ENCODE measurements at regions of chr9 and their contacts with region 1.

Region 1: DNA sequence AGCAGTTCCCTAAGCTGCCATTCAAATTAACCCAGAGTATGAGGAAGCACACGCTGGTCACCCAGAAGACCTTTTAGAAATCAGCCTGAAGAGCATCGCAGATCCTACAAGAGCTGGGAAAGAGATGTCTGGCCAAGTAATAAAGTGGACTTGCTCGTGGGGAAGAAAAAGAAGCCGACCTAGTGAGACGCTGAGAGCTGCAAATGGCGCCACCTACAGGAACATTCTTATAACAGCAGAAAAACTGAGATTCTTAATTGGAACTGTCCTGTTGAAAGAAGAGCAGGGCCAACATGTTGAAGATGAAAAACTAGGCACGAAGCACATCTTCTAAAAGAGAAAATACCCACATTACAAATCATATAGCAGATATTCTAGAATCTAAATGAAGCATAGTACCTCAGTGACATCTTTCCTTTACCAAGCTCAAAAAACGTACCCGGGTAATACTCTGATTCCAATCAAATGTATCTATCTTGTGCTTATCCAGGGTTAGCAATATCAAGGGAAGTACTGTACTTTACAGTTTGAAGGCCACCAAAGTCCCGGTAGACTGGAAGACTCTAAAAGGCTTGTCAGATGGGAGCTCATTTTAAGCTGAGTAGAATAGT is 3.9 kb upstream of the GNAQ start:
- DNase-seq: peak; percentile 45
- H3K4me3 ChIP-seq: no peak overlapping the region
- CTCF ChIP-seq: peak; percentile 72

Region 2: GRCh38 chr9:77751341-77752091 is 284.0 kb before region 1 on chr9:
- CTCF ChIA-PET with region 1: interaction called, 10 read pairs
- POLR2A ChIA-PET with region 1: no interaction called
- DNase-seq: peak; percentile 56
- H3K4me3 ChIP-seq: no peak overlapping the region
- CTCF ChIP-seq: peak; percentile 47

Region 3: DNA sequence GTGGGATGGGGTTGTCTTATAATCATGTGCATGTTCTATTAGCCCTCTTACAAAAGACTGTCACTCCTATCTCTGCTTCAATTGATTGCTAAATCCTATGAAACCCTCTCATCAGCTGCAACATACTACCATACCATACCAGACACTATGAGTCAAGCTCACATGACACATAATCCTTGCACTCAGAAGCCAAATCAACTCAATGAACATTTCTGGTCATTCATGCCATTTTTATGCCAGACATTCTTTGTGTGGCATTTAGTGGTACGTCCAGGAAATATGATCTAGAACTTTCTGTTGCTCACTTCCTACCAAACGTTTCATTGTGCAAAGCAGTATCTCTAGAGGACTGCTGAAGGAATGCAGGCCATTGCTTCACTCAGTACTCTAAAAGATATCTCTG is 228.2 kb before region 1 on chr9:
- CTCF ChIA-PET with region 1: interaction called, 11 read pairs
- POLR2A ChIA-PET with region 1: no interaction called
- DNase-seq: peak; percentile 89
- H3K4me3 ChIP-seq: no peak overlapping the region
- CTCF ChIP-seq: no peak

Region 4: GRCh38 chr9:77866878-77867277 is 168.6 kb before region 1 on chr9:
- CTCF ChIA-PET with region 1: interaction called, 10 read pairs
- POLR2A ChIA-PET with region 1: no interaction called
- DNase-seq: no peak
- H3K4me3 ChIP-seq: no peak overlapping the region
- CTCF ChIP-seq: no peak

Region 5: DNA sequence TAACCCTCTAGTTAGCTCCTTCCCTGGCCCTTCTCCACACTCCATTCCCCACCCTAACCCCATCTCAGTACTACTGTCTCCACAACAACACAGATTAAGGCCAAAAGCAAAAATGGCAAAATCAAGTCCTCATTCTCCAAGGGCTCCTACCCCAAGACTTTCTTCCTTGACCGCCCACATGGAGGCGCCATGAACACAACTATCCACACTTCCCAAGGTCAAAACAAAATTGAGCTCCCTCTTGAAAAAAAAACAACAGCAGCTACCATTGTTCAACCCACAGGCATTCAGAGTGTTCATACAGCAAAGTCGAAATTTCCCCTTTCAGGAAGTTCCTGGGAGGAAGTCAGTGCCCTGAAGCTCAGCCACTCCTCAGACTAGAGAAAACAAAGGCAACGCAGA is 58.3 kb before region 1 on chr9:
- CTCF ChIA-PET with region 1: interaction called, 146 read pairs
- POLR2A ChIA-PET with region 1: interaction called, 4 read pairs
- DNase-seq: no peak
- H3K4me3 ChIP-seq: no peak overlapping the region
- CTCF ChIP-seq: peak; percentile 51

Region 6: DNA sequence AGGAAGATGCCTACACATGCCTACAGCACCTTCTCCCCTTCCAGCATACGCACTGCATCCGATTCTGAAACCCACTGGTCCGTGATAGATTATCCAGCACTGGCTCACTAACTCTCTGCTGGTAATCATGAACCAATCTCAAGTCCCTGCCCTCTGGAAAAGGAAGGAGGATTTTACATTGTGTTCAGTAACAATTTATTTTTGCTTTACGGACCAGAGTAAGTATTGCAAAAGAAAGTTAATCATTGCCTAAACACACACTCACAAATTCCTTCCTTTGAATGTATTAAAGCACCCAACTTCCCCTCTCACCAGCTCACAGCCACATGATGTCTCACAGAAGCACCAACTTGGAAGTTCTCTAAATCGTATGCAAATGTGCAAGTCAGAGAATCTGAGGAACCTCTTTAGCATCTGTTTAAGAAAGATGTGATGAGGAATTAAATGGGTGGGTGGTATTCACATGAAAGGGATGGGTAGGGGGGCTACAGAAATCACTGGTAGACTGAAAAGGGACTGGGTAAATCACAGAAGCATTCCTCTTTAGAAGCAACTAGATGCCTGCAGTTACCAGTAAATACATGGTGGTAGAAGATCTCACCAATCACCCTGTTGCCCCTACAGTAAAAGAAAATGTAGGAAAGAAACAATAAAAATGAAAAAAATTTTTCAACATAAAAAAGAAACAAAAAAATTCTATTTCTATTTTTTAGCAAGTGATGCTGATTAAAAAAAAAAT is 12.3 kb before region 1 on chr9:
- CTCF ChIA-PET with region 1: interaction called, 15 read pairs
- POLR2A ChIA-PET with region 1: no interaction called
- DNase-seq: peak; percentile 42
- H3K4me3 ChIP-seq: no peak overlapping the region
- CTCF ChIP-seq: no peak

Region 7: GRCh38 chr9:78143281-78144007 is 108.0 kb after region 1 on chr9:
- CTCF ChIA-PET with region 1: no interaction called
- POLR2A ChIA-PET with region 1: no interaction called
- DNase-seq: no peak
- H3K4me3 ChIP-seq: no peak overlapping the region
- CTCF ChIP-seq: no peak

Measured in AG04449 (cell line).